ENCODE measurements at regions of chr2 and their contacts with region 1.

Region 1: DNA sequence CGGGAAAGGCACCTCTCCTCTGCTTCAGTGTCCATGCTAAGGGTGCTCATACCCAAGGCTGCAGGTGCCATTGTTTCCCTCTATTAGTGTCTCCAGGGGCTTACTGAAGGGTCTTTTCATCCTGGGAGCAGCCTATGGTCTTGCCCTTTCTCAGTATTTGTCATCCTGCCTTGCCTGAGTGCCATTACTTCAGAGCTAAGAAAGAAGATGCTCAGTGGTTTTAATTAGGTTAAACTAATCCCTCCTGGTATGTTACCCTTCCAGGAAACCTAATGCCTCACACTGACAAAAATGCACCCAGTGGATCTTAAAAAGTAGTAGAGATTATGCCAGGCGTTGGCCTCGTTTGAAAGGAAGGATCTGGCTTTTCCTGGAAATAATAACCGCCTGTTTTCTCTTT is 151.4 kb downstream of the LRRTM1 start:
- DNase-seq: no peak
- ATAC-seq: no peak
- H3K4me3 ChIP-seq: no peak overlapping the region
- H3K27ac ChIP-seq: no peak overlapping the region
- H3K4me1 ChIP-seq: no peaks in the 10 kb centered on the region
- H3K27me3 ChIP-seq: no peaks in the 10 kb centered on the region
- CTCF ChIP-seq: no peak
- EP300 ChIP-seq: no peak
- POLR2A ChIP-seq: no peak
- RAD21 ChIP-seq: no peak

Region 2: GRCh38 chr2:80429251-80429650 is 276.1 kb after region 1 on chr2:
- CTCF ChIA-PET with region 1: no interaction called
- POLR2A ChIA-PET with region 1: interaction called, 11 read pairs
- RAD21 ChIA-PET with region 1: no interaction called
- SMC1A ChIA-PET with region 1: no interaction called
- in situ Hi-C with region 1: no loop called
- intact Hi-C with region 1: no loop called
- DNase-seq: no peak
- ATAC-seq: no peak
- H3K4me3 ChIP-seq: no peak overlapping the region
- H3K27ac ChIP-seq: no peak overlapping the region
- H3K4me1 ChIP-seq: no peaks in the 10 kb centered on the region
- H3K27me3 ChIP-seq: no peaks in the 10 kb centered on the region
- CTCF ChIP-seq: no peak
- EP300 ChIP-seq: no peak
- POLR2A ChIP-seq: no peak
- RAD21 ChIP-seq: no peak

Measured in GM12878 (cell line).